Activated B cell treated with CpG ODN at 0.5 μM for 24 hours (primary cell): ENCODE measurements at regions of chr4 and their contacts with region 1.

Region 1: GRCh38 chr4:44678094-44679041 is at the start of gene GUF1:
- DNase-seq: peak; percentile 84
- ATAC-seq: peak; percentile 90
- H3K4me3 Mint-ChIP-seq: peak within 1 kb of the TSS; percentile 97
- H3K27ac Mint-ChIP-seq: peak within 1 kb of the TSS; percentile 97
- H3K4me1 Mint-ChIP-seq: peaks cover 25% of the 10 kb centered on the region
- H3K27me3 Mint-ChIP-seq: no peaks in the 10 kb centered on the region
- CTCF ChIP-seq: no peak
- total RNA-seq, gene GUF1: 21.5 and 26.0 TPM in 2 replicates

Region 2: GRCh38 chr4:44462259-44462658 is 216.1 kb before region 1 on chr4:
- CTCF ChIA-PET with region 1: no interaction called
- POLR2A ChIA-PET with region 1: no interaction called
- intact Hi-C with region 1: no loop called
- DNase-seq: no peak
- ATAC-seq: no peak
- H3K4me3 Mint-ChIP-seq: no peak overlapping the region
- H3K27ac Mint-ChIP-seq: no peak overlapping the region
- H3K4me1 Mint-ChIP-seq: no peaks in the 10 kb centered on the region
- H3K27me3 Mint-ChIP-seq: no peaks in the 10 kb centered on the region
- CTCF ChIP-seq: no peak

Region 3: DNA sequence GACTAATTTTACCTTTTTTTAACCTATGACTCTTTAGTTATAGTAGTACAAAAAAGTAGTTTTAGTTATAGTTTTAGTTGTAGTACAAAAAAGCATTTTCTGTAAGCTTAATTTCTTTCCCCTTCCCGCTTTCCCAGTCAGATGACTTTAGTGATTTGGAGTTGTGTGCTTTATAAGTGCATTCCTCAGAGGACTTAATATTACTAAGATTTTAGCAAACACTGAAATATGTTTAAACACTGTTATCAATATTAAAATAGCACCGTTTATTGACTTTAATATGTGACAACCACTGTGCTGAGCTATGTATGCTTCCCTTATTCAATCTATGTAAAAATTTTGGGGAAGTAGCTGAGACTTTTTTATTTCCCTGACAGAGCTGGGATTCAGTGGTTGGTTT is 22.7 kb after region 1 on chr4:
- CTCF ChIA-PET with region 1: no interaction called
- POLR2A ChIA-PET with region 1: no interaction called
- intact Hi-C with region 1: loop called (anchors 2 kb)
- DNase-seq: no peak
- ATAC-seq: no peak
- H3K4me3 Mint-ChIP-seq: no peak overlapping the region
- H3K27ac Mint-ChIP-seq: no peak overlapping the region
- H3K4me1 Mint-ChIP-seq: no peaks in the 10 kb centered on the region
- H3K27me3 Mint-ChIP-seq: no peaks in the 10 kb centered on the region
- CTCF ChIP-seq: no peak

Region 4: GRCh38 chr4:44726262-44726871 is 48.0 kb after region 1 on chr4 and contains the start of gene GNPDA2:
- CTCF ChIA-PET with region 1: interaction called, 3 read pairs
- POLR2A ChIA-PET with region 1: interaction called, 43 read pairs
- intact Hi-C with region 1: loop called (anchors 1 kb)
- DNase-seq: peak; percentile 75
- ATAC-seq: peak; percentile 89
- H3K4me3 Mint-ChIP-seq: peak within 1 kb of the TSS; percentile 97
- H3K27ac Mint-ChIP-seq: peak within 1 kb of the TSS; percentile 96
- H3K4me1 Mint-ChIP-seq: peaks cover 33% of the 10 kb centered on the region
- H3K27me3 Mint-ChIP-seq: no peaks in the 10 kb centered on the region
- CTCF ChIP-seq: no peak
- total RNA-seq, gene GNPDA2: 17.5 and 17.6 TPM in 2 replicates